ENCODE measurements at regions of chr6 and their contacts with region 1.

Region 1: GRCh38 chr6:2695454-2696095 is 55.1 kb downstream of the MYLK4 start:
- DNase-seq: peak; percentile 43
- H3K4me3 Mint-ChIP-seq: no peak overlapping the region
- H3K27ac Mint-ChIP-seq: no peak overlapping the region
- H3K4me1 Mint-ChIP-seq: no peaks in the 10 kb centered on the region
- H3K27me3 Mint-ChIP-seq: no peaks in the 10 kb centered on the region
- CTCF ChIP-seq: peak; percentile 64

Region 2: GRCh38 chr6:1596088-1596852 is 1099.3 kb before region 1 on chr6:
- CTCF ChIA-PET with region 1: interaction called, 22 read pairs
- POLR2A ChIA-PET with region 1: interaction called, 4 read pairs
- intact Hi-C with region 1: loop called (anchors 1 kb)
- DNase-seq: peak; percentile 55
- H3K4me3 Mint-ChIP-seq: no peak overlapping the region
- H3K27ac Mint-ChIP-seq: no peak overlapping the region
- H3K4me1 Mint-ChIP-seq: peaks cover 28% of the 10 kb centered on the region
- H3K27me3 Mint-ChIP-seq: peaks cover 21% of the 10 kb centered on the region
- CTCF ChIP-seq: peak; percentile 93

Region 3: GRCh38 chr6:2111162-2111677 is 584.4 kb before region 1 on chr6:
- CTCF ChIA-PET with region 1: interaction called, 4 read pairs
- POLR2A ChIA-PET with region 1: no interaction called
- intact Hi-C with region 1: loop called (anchors 5 kb)
- DNase-seq: peak; percentile 75
- H3K4me3 Mint-ChIP-seq: peak overlapping the region; percentile 55
- H3K27ac Mint-ChIP-seq: peak overlapping the region; percentile 75
- H3K4me1 Mint-ChIP-seq: peaks cover 16% of the 10 kb centered on the region
- H3K27me3 Mint-ChIP-seq: no peaks in the 10 kb centered on the region
- CTCF ChIP-seq: no peak

Region 4: DNA sequence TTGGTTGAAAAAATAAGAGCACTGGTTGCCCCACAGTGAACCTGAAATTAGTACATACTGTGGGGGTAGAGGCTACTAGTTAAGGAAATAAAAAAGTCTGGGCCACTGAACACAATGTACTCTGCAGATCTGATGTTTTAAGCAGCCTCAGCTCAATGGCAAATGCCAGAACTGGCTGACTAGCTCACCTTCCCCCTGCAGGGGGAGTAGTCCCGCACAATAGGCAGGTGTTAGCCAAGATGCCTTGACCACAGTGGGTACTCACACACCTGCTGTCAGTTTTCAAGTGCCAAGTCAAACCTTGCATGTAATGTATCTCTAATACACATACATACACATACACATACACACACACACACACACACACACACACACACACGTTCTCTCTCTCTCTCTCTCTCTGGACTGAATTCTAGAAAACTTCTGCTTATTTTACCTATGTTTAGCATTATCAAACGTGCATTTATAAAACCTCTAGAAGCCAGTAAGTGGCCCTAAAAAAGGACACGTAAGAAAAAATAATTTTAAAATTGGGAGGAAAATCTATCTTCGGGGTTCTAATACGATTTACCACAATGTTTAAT is 486.3 kb before region 1 on chr6:
- CTCF ChIA-PET with region 1: interaction called, 8 read pairs
- POLR2A ChIA-PET with region 1: no interaction called
- intact Hi-C with region 1: loop called (anchors 2 kb)
- DNase-seq: peak; percentile 82
- H3K4me3 Mint-ChIP-seq: no peak overlapping the region
- H3K27ac Mint-ChIP-seq: no peak overlapping the region
- H3K4me1 Mint-ChIP-seq: no peaks in the 10 kb centered on the region
- H3K27me3 Mint-ChIP-seq: no peaks in the 10 kb centered on the region
- CTCF ChIP-seq: peak; percentile 62

Region 5: GRCh38 chr6:2448820-2449571 is 246.6 kb before region 1 on chr6:
- CTCF ChIA-PET with region 1: interaction called, 4 read pairs
- POLR2A ChIA-PET with region 1: no interaction called
- intact Hi-C with region 1: loop called (anchors 10 kb)
- DNase-seq: peak; percentile 82
- H3K4me3 Mint-ChIP-seq: no peak overlapping the region
- H3K27ac Mint-ChIP-seq: no peak overlapping the region
- H3K4me1 Mint-ChIP-seq: peaks cover 6% of the 10 kb centered on the region
- H3K27me3 Mint-ChIP-seq: no peaks in the 10 kb centered on the region
- CTCF ChIP-seq: peak; percentile 67

Region 6: DNA sequence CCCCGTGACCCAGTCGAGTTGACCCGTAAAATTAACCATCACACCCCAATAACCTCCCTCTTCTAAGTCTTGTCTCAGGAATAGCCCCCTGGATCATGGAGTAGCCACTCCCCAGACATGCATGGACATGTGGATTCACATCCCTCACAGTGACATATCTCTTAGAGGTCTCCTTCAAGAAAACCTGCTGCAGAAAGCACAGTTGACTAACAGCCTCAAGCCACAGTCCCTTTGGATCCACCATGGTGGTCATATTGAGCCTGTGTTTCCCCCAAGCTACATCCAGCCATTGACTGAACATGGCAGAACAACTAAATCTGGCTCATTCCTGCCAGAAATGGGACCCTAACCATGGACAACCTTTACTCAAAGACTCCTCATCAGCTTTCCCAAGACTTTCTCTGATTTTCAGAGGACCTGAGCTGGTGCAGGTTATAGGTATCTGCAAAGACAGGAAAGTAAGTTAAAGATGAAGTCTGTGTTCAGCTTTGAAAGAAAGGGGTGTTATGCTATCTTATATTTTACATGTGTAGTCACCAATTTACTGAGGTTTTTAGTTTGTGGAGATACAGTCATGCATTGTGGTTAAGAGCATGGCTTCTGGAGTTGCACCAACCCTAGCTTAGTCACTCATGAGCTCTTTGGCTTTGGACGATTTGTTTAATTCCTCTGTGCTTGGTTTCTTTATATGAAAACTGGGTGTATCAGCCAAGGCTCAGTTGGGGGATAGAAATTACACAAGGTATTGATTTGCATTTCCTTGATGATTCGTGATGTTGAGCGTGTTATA is 164.0 kb before region 1 on chr6:
- CTCF ChIA-PET with region 1: no interaction called
- POLR2A ChIA-PET with region 1: no interaction called
- intact Hi-C with region 1: loop called (anchors 5 kb)
- DNase-seq: peak; percentile 76
- H3K4me3 Mint-ChIP-seq: no peak overlapping the region
- H3K27ac Mint-ChIP-seq: no peak overlapping the region
- H3K4me1 Mint-ChIP-seq: peaks cover 16% of the 10 kb centered on the region
- H3K27me3 Mint-ChIP-seq: no peaks in the 10 kb centered on the region
- CTCF ChIP-seq: no peak

Region 7: DNA sequence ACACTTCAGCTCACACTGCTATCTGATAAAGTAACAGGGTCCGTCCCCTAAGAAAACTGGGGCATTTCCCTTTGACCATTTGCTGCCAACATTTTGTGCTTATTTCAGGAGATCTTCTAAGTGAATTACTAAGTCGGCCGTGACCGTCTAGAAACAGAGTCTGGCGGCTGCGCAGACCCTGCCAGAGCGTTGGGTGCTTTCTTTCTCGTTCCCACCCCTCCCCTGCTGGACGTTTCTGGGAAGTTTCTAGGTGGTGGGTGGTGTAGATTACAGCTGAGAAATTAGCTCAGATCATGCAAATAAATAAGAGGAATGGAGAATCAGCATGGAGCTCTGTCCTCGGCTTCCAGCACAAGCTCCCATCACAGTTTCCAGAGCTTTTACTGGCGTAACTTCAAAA is 72.9 kb before region 1 on chr6:
- CTCF ChIA-PET with region 1: no interaction called
- POLR2A ChIA-PET with region 1: no interaction called
- intact Hi-C with region 1: no loop called
- DNase-seq: no peak
- H3K4me3 Mint-ChIP-seq: no peak overlapping the region
- H3K27ac Mint-ChIP-seq: no peak overlapping the region
- H3K4me1 Mint-ChIP-seq: no peaks in the 10 kb centered on the region
- H3K27me3 Mint-ChIP-seq: no peaks in the 10 kb centered on the region
- CTCF ChIP-seq: no peak

Measured in MCF 10A (cell line).